Activated naive CD4-positive, alpha-beta T cell treated with anti-CD3 and anti-CD28 coated beads for 36 hours (primary cell): ENCODE measurements at regions of chr2 and their contacts with region 1.

Region 1: GRCh38 chr2:100610381-100610831 is 47.6 kb downstream of the PDCL3 start:
- DNase-seq: peak; percentile 89
- H3K4me3 Mint-ChIP-seq: no peak overlapping the region
- H3K27ac Mint-ChIP-seq: no peak overlapping the region
- H3K4me1 Mint-ChIP-seq: peaks cover 4% of the 10 kb centered on the region
- H3K27me3 Mint-ChIP-seq: no peaks in the 10 kb centered on the region

Region 2: DNA sequence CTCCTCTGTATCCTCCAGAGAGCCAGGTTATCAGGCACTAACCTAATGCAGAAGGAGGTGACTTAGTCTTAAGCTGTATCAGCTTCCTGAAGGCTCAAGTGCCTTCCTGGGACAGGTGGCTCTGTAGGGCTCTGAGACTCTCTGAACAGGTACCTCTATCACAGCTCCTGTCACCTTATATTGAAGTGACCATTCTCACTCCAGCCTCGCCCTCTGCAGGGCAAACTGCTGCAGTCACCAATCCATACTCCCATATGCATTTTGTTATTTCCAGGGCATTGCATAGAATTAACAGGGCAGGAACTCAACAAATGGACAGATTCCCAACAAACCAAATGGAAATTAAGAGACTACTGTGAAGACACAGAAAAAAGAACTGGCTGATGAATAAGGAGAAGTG is 917.6 kb before region 1 on chr2:
- CTCF ChIA-PET with region 1: no interaction called
- intact Hi-C with region 1: no loop called
- DNase-seq: no peak
- H3K4me3 Mint-ChIP-seq: no peak overlapping the region
- H3K27ac Mint-ChIP-seq: no peak overlapping the region
- H3K4me1 Mint-ChIP-seq: no peaks in the 10 kb centered on the region
- H3K27me3 Mint-ChIP-seq: no peaks in the 10 kb centered on the region

Region 3: GRCh38 chr2:100161945-100162620 is 448.3 kb before region 1 on chr2:
- CTCF ChIA-PET with region 1: no interaction called
- intact Hi-C with region 1: no loop called
- DNase-seq: no peak
- H3K4me3 Mint-ChIP-seq: no peak overlapping the region
- H3K27ac Mint-ChIP-seq: no peak overlapping the region
- H3K4me1 Mint-ChIP-seq: no peaks in the 10 kb centered on the region
- H3K27me3 Mint-ChIP-seq: no peaks in the 10 kb centered on the region

Region 4: GRCh38 chr2:100630473-100630977 is 20.1 kb after region 1 on chr2:
- CTCF ChIA-PET with region 1: interaction called, 37 read pairs
- intact Hi-C with region 1: no loop called
- DNase-seq: peak; percentile 64
- H3K4me3 Mint-ChIP-seq: no peak overlapping the region
- H3K27ac Mint-ChIP-seq: no peak overlapping the region
- H3K4me1 Mint-ChIP-seq: peaks cover 22% of the 10 kb centered on the region
- H3K27me3 Mint-ChIP-seq: no peaks in the 10 kb centered on the region

Region 5: GRCh38 chr2:100818606-100819369 is 208.4 kb after region 1 on chr2:
- CTCF ChIA-PET with region 1: interaction called, 6 read pairs
- intact Hi-C with region 1: loop called (anchors 5 kb)
- DNase-seq: peak; percentile 39
- H3K4me3 Mint-ChIP-seq: peak overlapping the region; percentile 70
- H3K27ac Mint-ChIP-seq: no peak overlapping the region
- H3K4me1 Mint-ChIP-seq: peaks cover 26% of the 10 kb centered on the region
- H3K27me3 Mint-ChIP-seq: peaks cover 15% of the 10 kb centered on the region

Region 6: DNA sequence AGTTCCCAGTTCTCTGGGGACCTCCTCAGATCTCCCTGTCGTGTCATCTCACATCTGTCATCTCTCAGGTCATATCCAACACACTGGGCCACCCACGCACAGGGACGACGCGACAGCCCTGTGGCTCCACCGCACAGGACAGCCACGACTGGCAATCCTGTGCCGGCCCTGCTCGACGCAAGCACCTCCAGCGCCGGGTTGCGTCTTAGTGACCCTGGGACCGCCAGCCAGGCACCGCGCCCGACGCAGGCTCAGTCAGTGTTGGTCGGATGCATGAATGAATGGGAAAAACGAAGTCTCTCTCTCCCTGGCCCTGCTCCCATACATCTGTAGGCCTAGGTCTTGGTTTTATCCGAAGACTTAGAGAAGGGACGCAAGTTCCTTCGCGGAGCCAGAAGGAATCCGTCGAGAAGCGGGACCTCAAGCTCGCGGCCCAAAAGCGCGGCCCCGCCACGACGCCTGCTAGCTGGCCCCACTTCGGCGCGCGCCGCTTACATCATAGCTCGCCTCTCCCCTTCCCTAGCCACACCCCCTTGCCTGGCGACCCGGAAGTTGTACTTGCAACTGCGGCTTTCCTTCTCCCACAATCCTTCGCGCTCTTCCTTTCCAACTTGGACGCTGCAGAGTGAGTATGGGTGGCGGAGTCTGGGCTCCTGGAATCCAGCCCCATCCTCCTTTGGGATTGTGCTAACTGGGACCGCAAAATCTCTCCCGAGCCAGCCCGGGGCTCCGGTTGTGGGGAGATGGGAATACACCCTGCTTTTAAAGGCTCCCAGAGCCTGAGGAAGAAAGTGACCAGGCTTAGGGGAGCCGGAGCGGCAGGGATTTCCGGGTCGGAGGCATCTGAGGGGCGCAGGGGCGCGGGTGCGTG is 391.5 kb after region 1 on chr2 and contains the start of gene RPL31:
- CTCF ChIA-PET with region 1: interaction called, 3 read pairs
- intact Hi-C with region 1: loop called (anchors 5 kb)
- DNase-seq: peak; percentile 99
- H3K4me3 Mint-ChIP-seq: peak within 1 kb of the TSS; percentile 99
- H3K27ac Mint-ChIP-seq: peak within 1 kb of the TSS; percentile 94
- H3K4me1 Mint-ChIP-seq: peaks cover 46% of the 10 kb centered on the region
- H3K27me3 Mint-ChIP-seq: no peaks in the 10 kb centered on the region
- total RNA-seq, gene RPL31: 2,225 to 2,255 TPM